PC-9 (cell line): ENCODE measurements at regions of chr11 and their contacts with region 1.

Region 1: DNA sequence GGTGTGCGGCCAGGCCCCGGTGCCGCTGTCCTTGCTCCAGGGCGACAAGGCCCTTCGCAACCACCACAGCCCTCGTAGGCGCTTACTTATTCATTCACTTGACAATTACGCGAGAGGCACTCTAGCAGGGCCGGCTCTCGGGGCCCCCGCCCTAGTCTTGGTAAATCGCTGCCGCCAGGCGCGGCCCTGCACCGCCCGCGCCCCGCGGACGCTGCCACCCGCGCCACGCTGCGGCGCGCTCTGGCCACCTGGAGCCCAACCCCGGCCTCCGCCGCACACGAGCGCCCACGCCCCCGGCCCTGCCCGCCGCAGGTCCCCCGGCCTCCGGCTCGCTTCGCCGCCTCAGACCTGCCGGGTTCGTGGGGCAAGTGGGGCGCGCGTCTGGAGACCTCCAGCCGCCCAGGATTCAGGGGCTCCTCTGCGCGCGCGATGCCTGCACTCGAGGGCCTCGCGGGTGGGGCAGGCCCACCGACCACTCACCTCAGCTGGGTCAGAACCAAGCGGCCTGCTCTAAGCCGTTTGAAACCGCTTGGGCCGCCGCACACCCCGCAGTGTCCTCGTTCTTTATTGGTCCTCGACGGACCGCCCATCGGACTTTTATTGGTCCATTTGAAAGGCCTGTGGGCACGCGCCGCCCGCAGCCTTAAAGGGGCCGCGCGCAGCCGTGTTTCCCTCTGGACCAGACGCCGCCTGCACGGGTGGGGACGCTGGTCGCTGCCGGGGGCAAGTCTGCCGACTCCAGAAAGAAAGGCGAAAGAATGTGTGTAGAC is at the start of gene CKAP5:
- DNase-seq: peak; percentile 73 to 86
- H3K4me3 ChIP-seq: peak within 1 kb of the TSS; percentile 95
- H3K27ac ChIP-seq: peak within 1 kb of the TSS; percentile 50; the same call in 1 of the 2 replicates
- H3K4me1 ChIP-seq: peaks cover 22% of the 10 kb centered on the region
- H3K27me3 ChIP-seq: no peaks in the 10 kb centered on the region
- CTCF ChIP-seq: no peak
- total RNA-seq, gene CKAP5: 155 and 195 TPM in 2 replicates

Region 2: GRCh38 chr11:46649180-46649738 is 196.7 kb before region 1 on chr11:
- CTCF ChIA-PET with region 1: no interaction called
- POLR2A ChIA-PET with region 1: interaction called, 15 read pairs
- intact Hi-C with region 1: no loop called
- DNase-seq: peak in 1 of 2 experiments; percentile 19
- H3K4me3 ChIP-seq: no peak overlapping the region
- H3K27ac ChIP-seq: no peak overlapping the region
- H3K4me1 ChIP-seq: no peaks in the 10 kb centered on the region
- H3K27me3 ChIP-seq: no peaks in the 10 kb centered on the region
- CTCF ChIP-seq: no peak

Region 3: GRCh38 chr11:46826310-46827044 is 19.4 kb before region 1 on chr11:
- CTCF ChIA-PET with region 1: no interaction called
- POLR2A ChIA-PET with region 1: interaction called, 3 read pairs
- intact Hi-C with region 1: loop called (anchors 1 kb)
- DNase-seq: peak; percentile 61 to 85
- H3K4me3 ChIP-seq: peak overlapping the region; percentile 45
- H3K27ac ChIP-seq: no peak overlapping the region
- H3K4me1 ChIP-seq: no peaks in the 10 kb centered on the region
- H3K27me3 ChIP-seq: no peaks in the 10 kb centered on the region
- CTCF ChIP-seq: no peak

Region 4: DNA sequence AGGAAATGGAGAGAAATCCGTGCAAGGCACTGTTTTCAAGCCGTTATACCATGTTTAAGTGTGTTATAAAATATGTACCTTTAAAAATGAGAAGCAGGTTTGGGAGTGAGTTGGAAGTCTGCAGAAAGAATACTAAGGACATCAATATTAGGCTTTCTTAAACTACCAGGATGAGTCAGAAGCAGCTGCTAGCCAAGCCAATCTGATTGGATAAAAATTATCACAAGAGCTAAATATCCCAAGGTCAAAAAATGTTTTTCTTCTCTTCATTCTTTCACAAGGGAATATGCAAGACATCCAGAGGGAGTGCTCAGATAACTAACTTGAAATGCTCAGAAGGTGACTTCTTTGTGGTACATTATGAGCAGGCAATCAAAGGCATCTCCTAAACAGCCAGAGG is 19.4 kb after region 1 on chr11:
- CTCF ChIA-PET with region 1: interaction called, 11 read pairs
- POLR2A ChIA-PET with region 1: interaction called, 18 read pairs
- intact Hi-C with region 1: no loop called
- DNase-seq: peak in 1 of 2 experiments; percentile 18
- H3K4me3 ChIP-seq: no peak overlapping the region
- H3K27ac ChIP-seq: no peak overlapping the region
- H3K4me1 ChIP-seq: no peaks in the 10 kb centered on the region
- H3K27me3 ChIP-seq: no peaks in the 10 kb centered on the region
- CTCF ChIP-seq: no peak